Ascending aorta (tissue), 2 donors: ENCODE measurements at regions of chr11 and their contacts with region 1.

Region 1: GRCh38 chr11:66970808-66971442 is 4.2 kb upstream of the C11orf86 start:
- DNase-seq: peak; percentile 57 to 95
- H3K4me3 ChIP-seq: no peak overlapping the region
- H3K27ac ChIP-seq: peak overlapping the region; percentile 92 to 96
- H3K4me1 ChIP-seq: peaks cover 15 to 18% of the 10 kb centered on the region in 2 donors
- H3K27me3 ChIP-seq: no peaks in the 10 kb centered on the region
- CTCF ChIP-seq: no peak

Region 2: GRCh38 chr11:66842896-66843775 is 127.8 kb before region 1 on chr11 and contains the start of gene RCE1:
- intact Hi-C with region 1: loop called (anchors 5 kb)
- DNase-seq: peak; percentile 56 to 92
- H3K4me3 ChIP-seq: peak within 1 kb of the TSS; percentile 76 to 90
- H3K27ac ChIP-seq: peak within 1 kb of the TSS; percentile 93 to 99
- H3K4me1 ChIP-seq: peaks cover 12 to 23% of the 10 kb centered on the region in 2 donors
- H3K27me3 ChIP-seq: no peaks in the 10 kb centered on the region
- CTCF ChIP-seq: no peak
- total RNA-seq, gene RCE1: 45.7 TPM

Region 3: GRCh38 chr11:66855574-66856495 is 115.1 kb before region 1 on chr11:
- intact Hi-C with region 1: loop called (anchors 2 kb)
- DNase-seq: peak; percentile 78 to 96
- H3K4me3 ChIP-seq: peak overlapping the region; percentile 64 to 85
- H3K27ac ChIP-seq: peak overlapping the region; percentile 75 to 92
- H3K4me1 ChIP-seq: peaks cover 4 to 6% of the 10 kb centered on the region in 2 donors
- H3K27me3 ChIP-seq: no peaks in the 10 kb centered on the region
- CTCF ChIP-seq: no peak

Region 4: GRCh38 chr11:66958232-66958955 is 12.5 kb before region 1 on chr11 and contains the start of gene PC:
- intact Hi-C with region 1: loop called (anchors 1 kb)
- DNase-seq: peak; percentile 99 to 100
- H3K4me3 ChIP-seq: peak within 1 kb of the TSS; percentile 61 to 92
- H3K27ac ChIP-seq: peak within 1 kb of the TSS; percentile 77 to 80
- H3K4me1 ChIP-seq: peaks cover 0 to 15% of the 10 kb centered on the region in 2 donors
- H3K27me3 ChIP-seq: no peaks in the 10 kb centered on the region
- CTCF ChIP-seq: no peak
- total RNA-seq, gene PC: 13.5 TPM

Region 5: DNA sequence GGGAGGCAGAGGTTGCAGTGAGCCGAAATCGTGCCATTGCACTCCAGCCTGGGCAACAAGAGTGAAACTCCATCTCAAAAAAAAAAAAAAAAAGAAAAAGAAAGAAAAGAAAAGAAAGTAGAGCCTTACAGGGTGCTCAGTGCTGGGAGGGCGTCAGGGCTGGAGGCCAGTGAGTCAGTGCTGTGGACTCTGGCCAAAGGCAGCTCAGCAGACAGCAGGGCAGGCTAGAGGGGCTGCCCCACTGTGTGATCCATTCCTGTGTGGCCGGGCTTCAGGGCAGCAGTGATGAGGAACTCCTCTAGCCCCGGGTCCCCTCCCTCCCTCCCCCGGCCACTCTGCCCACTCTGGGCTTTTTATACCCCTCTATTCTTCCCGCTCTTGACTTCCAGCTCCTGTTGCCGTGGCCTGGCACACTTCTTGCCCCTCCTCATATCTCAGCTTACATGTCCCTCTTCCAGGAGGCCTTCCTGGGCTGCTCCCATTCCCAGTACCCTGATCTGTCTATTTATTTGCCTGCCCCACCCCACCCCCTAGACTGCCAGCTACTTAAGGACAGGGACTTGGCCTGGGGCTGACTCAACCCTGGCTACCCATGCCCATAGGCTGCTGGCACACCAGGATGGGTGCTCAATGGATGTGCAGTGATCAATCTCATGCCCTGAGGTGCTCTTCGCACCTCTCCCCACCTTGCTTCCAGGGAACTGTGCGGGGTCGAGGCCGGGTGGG is 62.1 kb after region 1 on chr11:
- intact Hi-C with region 1: loop called (anchors 5 kb)
- DNase-seq: peak; percentile 32 to 88
- H3K4me3 ChIP-seq: no peak overlapping the region
- H3K27ac ChIP-seq: peak overlapping the region; percentile 46 to 69
- H3K4me1 ChIP-seq: peaks cover 3 to 12% of the 10 kb centered on the region in 2 donors
- H3K27me3 ChIP-seq: no peaks in the 10 kb centered on the region
- CTCF ChIP-seq: no peak

Region 6: DNA sequence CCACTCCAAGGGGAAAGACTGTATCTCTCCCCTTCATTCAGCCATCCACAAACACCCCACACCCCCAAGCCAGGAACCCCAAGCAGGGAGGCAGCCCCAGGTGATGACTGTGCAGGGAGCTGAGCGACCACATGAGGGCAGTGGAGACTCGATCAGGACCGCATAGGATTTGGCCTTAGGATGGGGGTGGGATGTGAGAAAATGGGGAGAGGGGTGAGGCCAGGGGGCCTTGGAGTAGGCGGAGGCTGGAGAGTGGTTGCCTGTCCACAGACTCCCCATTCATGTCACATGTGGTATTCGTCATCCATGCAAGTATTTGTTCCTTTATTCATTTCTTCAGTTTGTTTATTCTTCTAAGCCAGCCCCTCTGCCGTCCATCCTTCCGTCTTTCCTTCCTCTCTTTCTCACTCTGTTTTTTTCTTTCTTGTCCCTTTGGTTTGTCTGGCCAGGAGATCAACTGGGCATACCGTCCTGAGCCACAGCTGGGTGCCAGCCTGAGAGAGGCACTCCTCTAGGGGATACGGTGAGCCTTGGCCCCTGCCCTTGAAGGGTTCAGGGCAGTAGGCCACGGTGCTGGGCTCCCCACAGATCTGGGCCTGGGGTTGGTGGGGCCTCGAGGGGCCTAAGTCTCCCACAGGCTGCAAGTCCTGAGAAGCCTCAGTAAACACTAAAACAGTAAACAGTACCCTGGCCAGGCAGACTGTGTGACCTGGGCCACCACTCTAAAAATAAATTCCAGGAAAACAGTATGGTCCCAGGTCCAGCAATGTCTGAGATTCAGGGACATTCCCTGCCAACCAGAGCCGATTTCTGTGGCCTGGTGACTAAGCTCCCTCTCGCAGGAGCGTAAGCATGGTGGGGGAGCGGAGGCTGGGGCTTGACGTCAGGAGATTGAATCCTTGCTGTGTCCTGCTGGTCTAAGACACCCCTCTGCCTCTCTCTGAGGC is 83.2 kb after region 1 on chr11:
- intact Hi-C with region 1: loop called (anchors 5 kb)
- DNase-seq: peak; percentile 44 to 82
- H3K4me3 ChIP-seq: no peak overlapping the region
- H3K27ac ChIP-seq: peak overlapping the region; percentile 81 to 89
- H3K4me1 ChIP-seq: peaks cover 11 to 27% of the 10 kb centered on the region in 2 donors
- H3K27me3 ChIP-seq: no peaks in the 10 kb centered on the region
- CTCF ChIP-seq: peak; percentile 35 to 74 (median 59)

Region 7: GRCh38 chr11:67118801-67119584 is 148.1 kb after region 1 on chr11 and contains the start of gene KDM2A:
- intact Hi-C with region 1: loop called (anchors 5 kb)
- DNase-seq: peak; percentile 96 to 100
- H3K4me3 ChIP-seq: peak within 1 kb of the TSS; percentile 99 to 100
- H3K27ac ChIP-seq: peak within 1 kb of the TSS; percentile 96 to 100
- H3K4me1 ChIP-seq: peaks cover 5 to 20% of the 10 kb centered on the region in 2 donors
- H3K27me3 ChIP-seq: no peaks in the 10 kb centered on the region
- CTCF ChIP-seq: no peak
- total RNA-seq, gene KDM2A: 129 TPM